Naive thymus-derived CD4-positive, alpha-beta T cell (primary cell): ENCODE measurements at regions of chr11 and their contacts with region 1.

Region 1: GRCh38 chr11:44727373-44728287 is 868 bp downstream of the TSPAN18 start:
- DNase-seq: peak; percentile 68 to 87 (median 80)
- ATAC-seq: peak; percentile 88
- H3K4me3 ChIP-seq: peak overlapping the region; percentile 72
- H3K4me3 Mint-ChIP-seq: peak overlapping the region; percentile 73 to 95 (median 90)
- H3K27ac ChIP-seq: peak overlapping the region; percentile 71
- H3K27ac Mint-ChIP-seq: peak overlapping the region; percentile 37 to 91 (median 76)
- H3K4me1 ChIP-seq: peaks cover 10 to 31% of the 10 kb centered on the region in 2 donors
- H3K4me1 Mint-ChIP-seq: peaks cover 35 to 61% (median 56%) of the 10 kb centered on the region in 7 donors
- H3K27me3 ChIP-seq: peaks cover 0 to 3% of the 10 kb centered on the region in 2 donors
- H3K27me3 Mint-ChIP-seq: peaks cover 0 to 38% (median 0%) of the 10 kb centered on the region in 5 donors

Region 2: GRCh38 chr11:44621140-44621681 is 106.4 kb before region 1 on chr11:
- CTCF ChIA-PET with region 1: no interaction called
- POLR2A ChIA-PET with region 1: no interaction called
- intact Hi-C with region 1: loop called in 1 of 2 experiments (anchors 5 kb)
- DNase-seq: peak; percentile 33 to 64 (median 55)
- ATAC-seq: peak; percentile 76
- H3K4me3 ChIP-seq: no peak overlapping the region
- H3K4me3 Mint-ChIP-seq: no peak overlapping the region
- H3K27ac ChIP-seq: no peak overlapping the region
- H3K27ac Mint-ChIP-seq: peak overlapping the region in 1 of 9 donors; percentile 12
- H3K4me1 ChIP-seq: peaks cover 0 to 20% of the 10 kb centered on the region in 2 donors
- H3K4me1 Mint-ChIP-seq: peaks cover 20 to 44% (median 30%) of the 10 kb centered on the region in 7 donors
- H3K27me3 ChIP-seq: no peaks in the 10 kb centered on the region
- H3K27me3 Mint-ChIP-seq: no peaks in the 10 kb centered on the region

Region 3: GRCh38 chr11:44658506-44658850 is 69.2 kb before region 1 on chr11:
- CTCF ChIA-PET with region 1: interaction called, 3 read pairs
- POLR2A ChIA-PET with region 1: no interaction called
- intact Hi-C with region 1: loop called (anchors 1 to 2 kb)
- DNase-seq: peak in 5 of 9 donors; percentile 14 to 37 (median 30)
- ATAC-seq: peak; percentile 29
- H3K4me3 ChIP-seq: no peak overlapping the region
- H3K4me3 Mint-ChIP-seq: peak overlapping the region in 1 of 10 donors; percentile 16
- H3K27ac ChIP-seq: no peak overlapping the region
- H3K27ac Mint-ChIP-seq: peak overlapping the region in 2 of 9 donors; percentile 54 to 58
- H3K4me1 ChIP-seq: peaks cover 0 to 15% of the 10 kb centered on the region in 2 donors
- H3K4me1 Mint-ChIP-seq: peaks cover 16 to 32% (median 26%) of the 10 kb centered on the region in 7 donors
- H3K27me3 ChIP-seq: no peaks in the 10 kb centered on the region
- H3K27me3 Mint-ChIP-seq: peaks cover 0 to 24% (median 0%) of the 10 kb centered on the region in 5 donors

Region 4: GRCh38 chr11:44747316-44747715 is 19.7 kb after region 1 on chr11:
- CTCF ChIA-PET with region 1: interaction called, 4 read pairs
- POLR2A ChIA-PET with region 1: interaction called, 3 read pairs
- intact Hi-C with region 1: loop called in 1 of 2 experiments (anchors 1 kb)
- DNase-seq: peak in 6 of 9 donors; percentile 41 to 68 (median 60)
- ATAC-seq: peak; percentile 76
- H3K4me3 ChIP-seq: no peak overlapping the region
- H3K4me3 Mint-ChIP-seq: peak overlapping the region in 9 of 10 donors; percentile 26 to 83 (median 70)
- H3K27ac ChIP-seq: peak overlapping the region; percentile 56
- H3K27ac Mint-ChIP-seq: peak overlapping the region in 8 of 9 donors; percentile 73 to 87 (median 82)
- H3K4me1 ChIP-seq: peaks cover 0 to 35% of the 10 kb centered on the region in 2 donors
- H3K4me1 Mint-ChIP-seq: peaks cover 10 to 95% (median 84%) of the 10 kb centered on the region in 7 donors
- H3K27me3 ChIP-seq: no peaks in the 10 kb centered on the region
- H3K27me3 Mint-ChIP-seq: no peaks in the 10 kb centered on the region

Region 5: GRCh38 chr11:44893846-44894617 is 166.4 kb after region 1 on chr11:
- CTCF ChIA-PET with region 1: interaction called, 3 read pairs
- POLR2A ChIA-PET with region 1: no interaction called
- intact Hi-C with region 1: loop called (anchors 1 kb)
- DNase-seq: peak; percentile 16 to 65 (median 45)
- ATAC-seq: peak; percentile 84
- H3K4me3 ChIP-seq: no peak overlapping the region
- H3K4me3 Mint-ChIP-seq: no peak overlapping the region
- H3K27ac ChIP-seq: no peak overlapping the region
- H3K27ac Mint-ChIP-seq: peak overlapping the region in 1 of 9 donors; percentile 45
- H3K4me1 ChIP-seq: no peaks in the 10 kb centered on the region
- H3K4me1 Mint-ChIP-seq: peaks cover 0 to 12% (median 4%) of the 10 kb centered on the region in 7 donors
- H3K27me3 ChIP-seq: no peaks in the 10 kb centered on the region
- H3K27me3 Mint-ChIP-seq: no peaks in the 10 kb centered on the region